ENCODE measurements at regions of chr22 and their contacts with region 1.

Region 1: DNA sequence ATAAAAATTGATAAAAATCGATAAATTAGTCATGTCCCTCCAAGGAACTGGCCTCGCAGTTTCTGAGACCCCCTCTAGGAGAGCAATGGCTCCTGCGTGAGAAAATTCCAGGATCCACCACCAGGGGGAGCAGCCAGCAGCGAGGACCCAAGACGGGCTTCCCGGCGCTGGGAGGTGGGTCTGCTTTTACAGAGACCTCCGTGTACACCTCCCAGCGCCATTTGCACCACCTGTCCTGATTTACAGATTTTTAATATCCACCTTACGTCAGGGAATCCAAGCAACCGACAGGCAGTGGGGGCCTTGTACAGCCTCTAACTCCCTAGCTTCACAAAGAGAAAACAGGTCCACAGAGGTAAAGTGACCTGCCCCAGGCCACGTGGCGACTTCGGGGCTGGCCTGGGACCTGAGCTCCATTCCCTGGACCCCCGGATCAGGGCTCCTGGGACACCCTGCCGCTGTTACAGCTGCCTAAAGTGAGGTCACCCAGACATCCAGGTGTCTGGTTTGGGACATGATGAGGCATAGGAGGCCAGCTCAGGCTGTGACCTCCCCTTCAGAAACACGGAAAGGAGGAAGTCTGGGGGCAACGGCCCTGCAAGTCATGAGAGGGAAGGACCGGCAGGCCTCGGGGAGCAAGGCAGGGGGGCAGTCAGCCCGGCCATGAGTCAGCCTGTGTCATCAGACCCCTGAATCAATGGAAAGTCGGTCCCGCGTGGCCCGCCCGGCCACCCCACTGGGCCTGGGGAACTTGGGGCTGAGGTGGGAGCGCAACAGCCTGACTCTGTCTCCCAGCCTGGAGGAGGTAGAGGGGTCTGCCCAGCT is 3.5 kb downstream of the OSM start:
- DNase-seq: peak; percentile 58 to 87 (median 70)
- ATAC-seq: peak; percentile 28
- H3K4me3 ChIP-seq: no peak overlapping the region
- H3K4me3 Mint-ChIP-seq: peak overlapping the region; percentile 32 to 94 (median 48)
- H3K27ac ChIP-seq: no peak overlapping the region
- H3K27ac Mint-ChIP-seq: peak overlapping the region in 8 of 9 donors; percentile 7 to 87 (median 68)
- H3K4me1 ChIP-seq: peaks cover 27 to 38% of the 10 kb centered on the region in 2 donors
- H3K4me1 Mint-ChIP-seq: peaks cover 21 to 57% (median 39%) of the 10 kb centered on the region in 7 donors
- H3K27me3 ChIP-seq: no peaks in the 10 kb centered on the region
- H3K27me3 Mint-ChIP-seq: no peaks in the 10 kb centered on the region

Region 2: GRCh38 chr22:29587938-29588699 is 675.0 kb before region 1 on chr22:
- CTCF ChIA-PET with region 1: no interaction called
- POLR2A ChIA-PET with region 1: no interaction called
- intact Hi-C with region 1: no loop called
- DNase-seq: no peak
- ATAC-seq: no peak
- H3K4me3 ChIP-seq: no peak overlapping the region
- H3K4me3 Mint-ChIP-seq: no peak overlapping the region
- H3K27ac ChIP-seq: no peak overlapping the region
- H3K27ac Mint-ChIP-seq: peak overlapping the region in 5 of 9 donors; percentile 25 to 86 (median 71)
- H3K4me1 ChIP-seq: peaks cover 6 to 8% of the 10 kb centered on the region in 2 donors
- H3K4me1 Mint-ChIP-seq: peaks cover 4 to 11% (median 10%) of the 10 kb centered on the region in 7 donors
- H3K27me3 ChIP-seq: no peaks in the 10 kb centered on the region
- H3K27me3 Mint-ChIP-seq: no peaks in the 10 kb centered on the region

Region 3: GRCh38 chr22:29603358-29604075 is 659.6 kb before region 1 on chr22 and contains the start of gene NF2:
- CTCF ChIA-PET with region 1: no interaction called
- POLR2A ChIA-PET with region 1: no interaction called
- intact Hi-C with region 1: loop called in 1 of 2 experiments (anchors 5 kb)
- DNase-seq: peak; percentile 96 to 99 (median 98)
- ATAC-seq: peak; percentile 98
- H3K4me3 ChIP-seq: peak within 1 kb of the TSS; percentile 92
- H3K4me3 Mint-ChIP-seq: peak within 1 kb of the TSS; percentile 85 to 98 (median 96)
- H3K27ac ChIP-seq: peak within 1 kb of the TSS; percentile 91
- H3K27ac Mint-ChIP-seq: peak within 1 kb of the TSS; percentile 91 to 99 (median 98)
- H3K4me1 ChIP-seq: peaks cover 11 to 16% of the 10 kb centered on the region in 2 donors
- H3K4me1 Mint-ChIP-seq: peaks cover 13 to 40% (median 28%) of the 10 kb centered on the region in 7 donors
- H3K27me3 ChIP-seq: no peaks in the 10 kb centered on the region
- H3K27me3 Mint-ChIP-seq: no peaks in the 10 kb centered on the region
- total RNA-seq, gene NF2: 27.6 to 56.3 (median 28.3) TPM

Region 4: GRCh38 chr22:30178181-30179126 is 84.7 kb before region 1 on chr22:
- CTCF ChIA-PET with region 1: no interaction called
- POLR2A ChIA-PET with region 1: interaction called, 3 read pairs
- intact Hi-C with region 1: loop called in 1 of 2 experiments (anchors 1 kb)
- DNase-seq: peak in 5 of 9 donors; percentile 15 to 29 (median 23)
- ATAC-seq: peak; percentile 61
- H3K4me3 ChIP-seq: no peak overlapping the region
- H3K4me3 Mint-ChIP-seq: peak overlapping the region in 7 of 10 donors; percentile 25 to 67 (median 34)
- H3K27ac ChIP-seq: no peak overlapping the region
- H3K27ac Mint-ChIP-seq: peak overlapping the region in 6 of 9 donors; percentile 22 to 88 (median 54)
- H3K4me1 ChIP-seq: peaks cover 0 to 18% of the 10 kb centered on the region in 2 donors
- H3K4me1 Mint-ChIP-seq: peaks cover 5 to 85% (median 21%) of the 10 kb centered on the region in 7 donors
- H3K27me3 ChIP-seq: no peaks in the 10 kb centered on the region
- H3K27me3 Mint-ChIP-seq: no peaks in the 10 kb centered on the region

Region 5: GRCh38 chr22:30277547-30278344 is 14.6 kb after region 1 on chr22:
- CTCF ChIA-PET with region 1: interaction called, 85 read pairs
- POLR2A ChIA-PET with region 1: interaction called, 11 read pairs
- intact Hi-C with region 1: loop called in 1 of 2 experiments (anchors 1 kb)
- DNase-seq: no peak
- ATAC-seq: no peak
- H3K4me3 ChIP-seq: no peak overlapping the region
- H3K4me3 Mint-ChIP-seq: peak overlapping the region in 1 of 10 donors; percentile 53
- H3K27ac ChIP-seq: no peak overlapping the region
- H3K27ac Mint-ChIP-seq: peak overlapping the region in 2 of 9 donors; percentile 43 to 56
- H3K4me1 ChIP-seq: peaks cover 5 to 20% of the 10 kb centered on the region in 2 donors
- H3K4me1 Mint-ChIP-seq: peaks cover 36 to 71% (median 42%) of the 10 kb centered on the region in 7 donors
- H3K27me3 ChIP-seq: no peaks in the 10 kb centered on the region
- H3K27me3 Mint-ChIP-seq: no peaks in the 10 kb centered on the region

Region 6: GRCh38 chr22:30326706-30327362 is 63.7 kb after region 1 on chr22 and contains the start of gene TBC1D10A:
- CTCF ChIA-PET with region 1: no interaction called
- POLR2A ChIA-PET with region 1: interaction called, 5 read pairs
- intact Hi-C with region 1: loop called (anchors 1 to 2 kb)
- DNase-seq: peak; percentile 87 to 93 (median 92)
- ATAC-seq: peak; percentile 97
- H3K4me3 ChIP-seq: peak within 1 kb of the TSS; percentile 83
- H3K4me3 Mint-ChIP-seq: peak within 1 kb of the TSS; percentile 87 to 96 (median 93)
- H3K27ac ChIP-seq: peak within 1 kb of the TSS; percentile 78
- H3K27ac Mint-ChIP-seq: peak within 1 kb of the TSS; percentile 82 to 94 (median 90)
- H3K4me1 ChIP-seq: peaks cover 43 to 49% of the 10 kb centered on the region in 2 donors
- H3K4me1 Mint-ChIP-seq: peaks cover 37 to 55% (median 48%) of the 10 kb centered on the region in 7 donors
- H3K27me3 ChIP-seq: no peaks in the 10 kb centered on the region
- H3K27me3 Mint-ChIP-seq: no peaks in the 10 kb centered on the region
- total RNA-seq, gene TBC1D10A: 47.2 to 73.8 (median 70.9) TPM

Region 7: GRCh38 chr22:30340911-30341685 is 78.0 kb after region 1 on chr22:
- CTCF ChIA-PET with region 1: no interaction called
- POLR2A ChIA-PET with region 1: no interaction called
- intact Hi-C with region 1: no loop called
- DNase-seq: no peak
- ATAC-seq: no peak
- H3K4me3 ChIP-seq: no peak overlapping the region
- H3K4me3 Mint-ChIP-seq: no peak overlapping the region
- H3K27ac ChIP-seq: no peak overlapping the region
- H3K27ac Mint-ChIP-seq: peak overlapping the region in 3 of 9 donors; percentile 17 to 59 (median 59)
- H3K4me1 ChIP-seq: no peaks in the 10 kb centered on the region
- H3K4me1 Mint-ChIP-seq: peaks cover 0 to 21% (median 8%) of the 10 kb centered on the region in 7 donors
- H3K27me3 ChIP-seq: no peaks in the 10 kb centered on the region
- H3K27me3 Mint-ChIP-seq: no peaks in the 10 kb centered on the region

Region 8: GRCh38 chr22:30386960-30387827 is 124.1 kb after region 1 on chr22 and contains the start of gene RNF215:
- CTCF ChIA-PET with region 1: interaction called, 28 read pairs
- POLR2A ChIA-PET with region 1: interaction called, 5 read pairs
- intact Hi-C with region 1: loop called (anchors 1 to 2 kb)
- DNase-seq: peak; percentile 55 to 92 (median 82)
- ATAC-seq: peak; percentile 97
- H3K4me3 ChIP-seq: no peak within 1 kb of the TSS
- H3K4me3 Mint-ChIP-seq: peak within 1 kb of the TSS; percentile 54 to 83 (median 78)
- H3K27ac ChIP-seq: peak within 1 kb of the TSS; percentile 26
- H3K27ac Mint-ChIP-seq: peak within 1 kb of the TSS in 6 of 9 donors; percentile 41 to 86 (median 70)
- H3K4me1 ChIP-seq: peaks cover 3 to 10% of the 10 kb centered on the region in 2 donors
- H3K4me1 Mint-ChIP-seq: peaks cover 16 to 22% (median 20%) of the 10 kb centered on the region in 7 donors
- H3K27me3 ChIP-seq: no peaks in the 10 kb centered on the region
- H3K27me3 Mint-ChIP-seq: peaks cover 0 to 4% (median 0%) of the 10 kb centered on the region in 5 donors
- total RNA-seq, gene RNF215: 4.3 to 10.8 (median 5.3) TPM

Region 9: GRCh38 chr22:30485362-30485988 is 222.3 kb after region 1 on chr22:
- CTCF ChIA-PET with region 1: interaction called, 3 read pairs
- POLR2A ChIA-PET with region 1: no interaction called
- intact Hi-C with region 1: loop called in 1 of 2 experiments (anchors 1 kb)
- DNase-seq: peak; percentile 61 to 84 (median 70)
- ATAC-seq: peak; percentile 98
- H3K4me3 ChIP-seq: no peak overlapping the region
- H3K4me3 Mint-ChIP-seq: no peak overlapping the region
- H3K27ac ChIP-seq: no peak overlapping the region
- H3K27ac Mint-ChIP-seq: peak overlapping the region in 3 of 9 donors; percentile 2 to 45 (median 9)
- H3K4me1 ChIP-seq: no peaks in the 10 kb centered on the region
- H3K4me1 Mint-ChIP-seq: peaks cover 0 to 2% (median 0%) of the 10 kb centered on the region in 7 donors
- H3K27me3 ChIP-seq: no peaks in the 10 kb centered on the region
- H3K27me3 Mint-ChIP-seq: peaks cover 0 to 4% (median 0%) of the 10 kb centered on the region in 5 donors

Region 10: GRCh38 chr22:30634471-30635233 is 371.5 kb after region 1 on chr22:
- CTCF ChIA-PET with region 1: no interaction called
- POLR2A ChIA-PET with region 1: no interaction called
- intact Hi-C with region 1: no loop called
- DNase-seq: peak; percentile 79 to 91 (median 88)
- ATAC-seq: peak; percentile 76
- H3K4me3 ChIP-seq: peak overlapping the region; percentile 77
- H3K4me3 Mint-ChIP-seq: peak overlapping the region; percentile 77 to 92 (median 83)
- H3K27ac ChIP-seq: peak overlapping the region; percentile 70
- H3K27ac Mint-ChIP-seq: peak overlapping the region; percentile 75 to 93 (median 85)
- H3K4me1 ChIP-seq: peaks cover 18 to 27% of the 10 kb centered on the region in 2 donors
- H3K4me1 Mint-ChIP-seq: peaks cover 13 to 25% (median 23%) of the 10 kb centered on the region in 7 donors
- H3K27me3 ChIP-seq: no peaks in the 10 kb centered on the region
- H3K27me3 Mint-ChIP-seq: no peaks in the 10 kb centered on the region